ENCODE measurements at regions of chr13 and their contacts with region 1.

Region 1: GRCh38 chr13:49840266-49840665 is 47.8 kb upstream of the KPNA3 start:
- DNase-seq: no peak
- ATAC-seq: no peak
- H3K4me3 ChIP-seq: no peak overlapping the region
- H3K27ac ChIP-seq: no peak overlapping the region
- H3K4me1 ChIP-seq: no peaks in the 10 kb centered on the region
- H3K27me3 ChIP-seq: no peaks in the 10 kb centered on the region
- CTCF ChIP-seq: no peak

Region 2: DNA sequence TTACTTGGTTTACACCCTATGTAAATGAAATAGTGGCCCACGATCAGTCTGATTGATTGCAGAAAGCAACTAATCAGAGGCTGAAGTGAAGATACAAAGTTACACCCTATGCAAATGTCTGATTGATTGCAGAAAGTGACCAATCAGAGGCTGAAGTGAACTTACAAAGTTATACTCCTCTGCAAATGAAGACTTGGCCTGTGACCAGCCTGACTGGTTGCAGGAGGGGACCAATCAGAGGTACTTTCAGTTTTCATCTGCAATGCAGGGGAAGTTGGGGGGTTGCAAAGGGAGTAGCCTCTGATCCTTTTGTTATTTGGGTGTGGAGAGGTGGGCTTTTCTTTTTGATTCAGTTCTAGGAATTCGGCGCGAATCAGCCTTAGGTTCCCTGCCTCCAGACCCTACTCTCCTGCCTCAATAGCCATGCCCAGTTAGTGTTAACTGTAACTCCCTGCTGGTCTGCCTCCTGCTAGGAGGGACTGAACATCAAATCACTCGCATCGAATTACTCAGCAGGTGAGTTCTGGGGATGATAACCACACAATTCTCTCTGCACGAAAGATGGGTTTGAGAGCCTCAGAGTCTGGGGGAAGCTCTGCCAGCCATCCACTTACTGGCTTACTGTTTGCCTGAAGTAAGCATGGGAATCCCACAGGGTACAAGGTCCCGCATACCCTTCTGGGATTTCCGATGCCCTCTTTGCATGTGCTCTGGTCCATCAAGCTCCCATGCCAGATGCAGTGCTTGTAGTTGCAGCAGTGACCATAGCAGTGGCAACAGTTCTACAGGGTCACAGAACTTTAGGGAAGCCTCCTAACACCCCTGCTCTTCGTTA is 204.4 kb before region 1 on chr13:
- CTCF ChIA-PET with region 1: no interaction called
- POLR2A ChIA-PET with region 1: no interaction called
- in situ Hi-C with region 1: no loop called
- intact Hi-C with region 1: no loop called
- DNase-seq: no peak
- ATAC-seq: no peak
- H3K4me3 ChIP-seq: no peak overlapping the region
- H3K27ac ChIP-seq: no peak overlapping the region
- H3K4me1 ChIP-seq: no peaks in the 10 kb centered on the region
- H3K27me3 ChIP-seq: no peaks in the 10 kb centered on the region
- CTCF ChIP-seq: no peak

Region 3: GRCh38 chr13:49669735-49670309 is 170.4 kb before region 1 on chr13:
- CTCF ChIA-PET with region 1: no interaction called
- POLR2A ChIA-PET with region 1: no interaction called
- in situ Hi-C with region 1: no loop called
- intact Hi-C with region 1: loop called (anchors 5 kb)
- DNase-seq: peak; percentile 67
- ATAC-seq: peak; percentile 91
- H3K4me3 ChIP-seq: no peak overlapping the region
- H3K27ac ChIP-seq: no peak overlapping the region
- H3K4me1 ChIP-seq: no peaks in the 10 kb centered on the region
- H3K27me3 ChIP-seq: no peaks in the 10 kb centered on the region
- CTCF ChIP-seq: peak; percentile 78

Measured in Panc1 (cell line).